MCF 10A (cell line): ENCODE measurements at regions of chr11 and their contacts with region 1.

Region 1: DNA sequence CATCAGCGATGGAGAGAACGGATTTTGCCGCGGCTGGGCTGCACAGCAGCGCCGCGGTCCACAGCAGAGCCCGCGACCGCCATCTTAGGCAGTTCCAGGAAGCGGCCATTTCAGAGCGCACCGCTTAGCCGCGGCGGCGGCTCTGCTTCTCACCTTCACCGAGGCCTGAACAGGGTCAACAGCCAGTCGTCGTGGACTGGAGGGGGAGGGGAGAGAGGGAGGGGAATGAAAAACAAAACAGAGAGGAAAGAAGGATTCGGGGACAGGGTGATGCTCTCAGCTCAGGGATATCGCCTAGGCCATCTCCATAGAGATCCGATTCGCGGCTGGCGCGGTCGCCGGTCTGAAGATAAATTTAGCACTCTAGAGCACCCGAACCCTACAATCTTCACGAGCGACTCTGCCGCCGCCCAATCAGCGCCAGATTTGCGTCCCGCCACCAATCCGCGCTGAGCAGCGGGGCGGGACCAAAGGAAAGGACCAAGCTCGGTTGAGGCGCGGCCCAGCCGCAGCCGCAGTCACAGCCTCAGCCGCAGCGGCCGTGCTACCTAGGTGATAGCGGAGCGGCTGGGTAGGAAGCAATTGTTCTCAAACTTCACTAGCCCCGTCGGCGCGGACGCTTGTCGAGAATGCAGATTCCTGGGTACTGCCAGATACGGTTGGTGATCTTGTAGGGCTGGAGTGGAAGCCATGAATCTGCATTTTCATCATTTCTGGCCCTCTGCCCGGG is at the start of gene ZBED5:
- DNase-seq: peak; percentile 97
- H3K4me3 Mint-ChIP-seq: peak within 1 kb of the TSS; percentile 87
- H3K27ac Mint-ChIP-seq: peak within 1 kb of the TSS; percentile 97
- H3K4me1 Mint-ChIP-seq: peaks cover 6% of the 10 kb centered on the region
- H3K27me3 Mint-ChIP-seq: no peaks in the 10 kb centered on the region
- CTCF ChIP-seq: no peak
- total RNA-seq, gene ZBED5: 38.9 and 53.3 TPM in 2 replicates

Region 2: DNA sequence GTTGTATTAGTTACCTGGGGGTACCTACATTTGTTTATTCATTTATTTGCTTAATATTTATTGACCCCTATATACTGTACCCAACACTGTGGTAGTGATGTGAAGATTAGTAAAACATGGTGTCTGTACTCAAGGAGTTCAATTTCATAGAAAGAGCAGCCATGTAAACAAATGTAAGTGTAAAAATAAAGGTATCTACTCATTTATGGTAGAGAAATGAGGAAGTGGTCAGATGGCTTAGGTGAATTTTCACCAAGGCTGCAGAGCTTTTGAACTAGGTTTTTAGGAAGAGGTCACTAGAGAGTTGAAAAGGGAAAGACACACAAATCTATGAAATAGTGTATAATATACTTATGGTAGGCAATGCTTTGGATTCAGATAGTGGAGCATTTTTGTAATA is 95.7 kb before region 1 on chr11:
- CTCF ChIA-PET with region 1: no interaction called
- POLR2A ChIA-PET with region 1: no interaction called
- intact Hi-C with region 1: no loop called
- DNase-seq: no peak
- H3K4me3 Mint-ChIP-seq: no peak overlapping the region
- H3K27ac Mint-ChIP-seq: no peak overlapping the region
- H3K4me1 Mint-ChIP-seq: no peaks in the 10 kb centered on the region
- H3K27me3 Mint-ChIP-seq: no peaks in the 10 kb centered on the region
- CTCF ChIP-seq: no peak

Region 3: DNA sequence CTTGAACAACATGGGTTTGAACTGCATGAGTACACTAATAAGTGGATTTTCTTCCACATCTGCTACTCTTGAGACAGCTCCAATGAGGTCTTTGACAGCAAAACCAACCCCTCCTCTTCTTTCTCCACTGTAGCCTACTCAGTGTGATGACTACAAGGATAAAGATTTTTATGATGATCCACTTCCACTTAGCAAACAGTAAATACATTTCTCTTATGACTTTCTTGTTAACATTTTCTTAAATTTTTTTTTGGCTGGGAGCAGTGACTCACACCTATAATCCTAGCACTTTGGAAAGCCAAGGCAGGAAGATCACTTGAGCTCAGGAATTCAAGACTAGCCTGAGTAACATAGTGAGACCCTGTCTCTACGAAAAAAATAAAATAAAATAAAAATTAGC is 39.3 kb before region 1 on chr11:
- CTCF ChIA-PET with region 1: no interaction called
- POLR2A ChIA-PET with region 1: interaction called, 18 read pairs
- intact Hi-C with region 1: no loop called
- DNase-seq: no peak
- H3K4me3 Mint-ChIP-seq: no peak overlapping the region
- H3K27ac Mint-ChIP-seq: no peak overlapping the region
- H3K4me1 Mint-ChIP-seq: peaks cover 7% of the 10 kb centered on the region
- H3K27me3 Mint-ChIP-seq: no peaks in the 10 kb centered on the region
- CTCF ChIP-seq: no peak

Region 4: DNA sequence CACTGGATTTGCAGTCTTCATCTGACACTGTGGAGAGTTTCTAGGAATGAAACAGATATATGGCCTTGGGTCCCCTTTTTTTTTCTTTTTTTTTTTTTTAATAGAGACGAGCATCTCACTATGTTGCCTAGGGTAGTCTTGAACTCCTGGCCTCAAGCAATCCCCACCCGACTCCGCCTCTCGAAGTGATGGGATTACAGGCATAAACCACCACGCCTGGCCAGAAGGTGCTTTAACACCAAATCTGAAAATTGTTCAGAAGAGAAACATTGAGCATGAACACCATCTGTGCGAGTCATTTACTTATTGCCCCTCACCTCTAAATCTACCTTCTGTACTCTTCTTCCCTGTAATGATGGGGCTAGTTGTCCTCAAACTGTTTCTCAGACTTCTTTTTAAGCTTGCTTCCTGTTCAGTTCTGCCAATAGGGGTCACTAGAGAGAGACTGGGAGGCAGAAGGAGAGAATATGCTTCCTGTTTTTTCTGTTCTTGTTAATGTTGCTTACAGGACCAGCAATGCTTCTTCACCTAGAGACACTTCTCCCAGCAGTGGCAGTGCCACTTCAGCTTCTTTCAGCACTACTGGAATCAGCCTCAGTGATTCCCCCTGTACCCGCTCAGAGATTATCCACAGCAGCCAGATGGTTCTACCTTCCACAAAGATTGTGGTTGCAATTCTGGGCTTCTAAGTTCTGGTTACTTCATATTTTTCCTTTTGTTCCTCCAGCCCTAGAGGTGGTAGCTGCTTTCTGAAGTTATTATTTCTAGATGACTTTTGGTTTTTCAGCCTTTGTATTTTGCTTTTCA is 20.7 kb after region 1 on chr11:
- CTCF ChIA-PET with region 1: interaction called, 7 read pairs
- POLR2A ChIA-PET with region 1: interaction called, 16 read pairs
- intact Hi-C with region 1: no loop called
- DNase-seq: peak; percentile 73
- H3K4me3 Mint-ChIP-seq: no peak overlapping the region
- H3K27ac Mint-ChIP-seq: no peak overlapping the region
- H3K4me1 Mint-ChIP-seq: peaks cover 26% of the 10 kb centered on the region
- H3K27me3 Mint-ChIP-seq: no peaks in the 10 kb centered on the region
- CTCF ChIP-seq: peak; percentile 57

Region 5: GRCh38 chr11:10906513-10906912 is 48.6 kb after region 1 on chr11:
- CTCF ChIA-PET with region 1: interaction called, 3 read pairs
- POLR2A ChIA-PET with region 1: interaction called, 326 read pairs
- intact Hi-C with region 1: no loop called
- DNase-seq: peak; percentile 30
- H3K4me3 Mint-ChIP-seq: no peak overlapping the region
- H3K27ac Mint-ChIP-seq: no peak overlapping the region
- H3K4me1 Mint-ChIP-seq: peaks cover 32% of the 10 kb centered on the region
- H3K27me3 Mint-ChIP-seq: no peaks in the 10 kb centered on the region
- CTCF ChIP-seq: peak; percentile 8

Region 6: GRCh38 chr11:10933455-10934292 is 75.8 kb after region 1 on chr11:
- CTCF ChIA-PET with region 1: no interaction called
- POLR2A ChIA-PET with region 1: interaction called, 36 read pairs
- intact Hi-C with region 1: loop called (anchors 1 kb)
- DNase-seq: peak; percentile 93
- H3K4me3 Mint-ChIP-seq: peak overlapping the region; percentile 80
- H3K27ac Mint-ChIP-seq: peak overlapping the region; percentile 29
- H3K4me1 Mint-ChIP-seq: peaks cover 25% of the 10 kb centered on the region
- H3K27me3 Mint-ChIP-seq: no peaks in the 10 kb centered on the region
- CTCF ChIP-seq: peak; percentile 90